CD8-positive, alpha-beta T cell (primary cell): ENCODE measurements at regions of chr15 and their contacts with region 1.

Region 1: GRCh38 chr15:41116116-41116871 is at the start of gene INO80:
- DNase-seq: peak; percentile 90 to 98 (median 96)
- ATAC-seq: peak; percentile 74
- H3K4me3 ChIP-seq: peak within 1 kb of the TSS; percentile 68 to 98
- H3K4me3 Mint-ChIP-seq: peak within 1 kb of the TSS; percentile 96
- H3K27ac ChIP-seq: peak within 1 kb of the TSS; percentile 83 to 96
- H3K27ac Mint-ChIP-seq: peak within 1 kb of the TSS; percentile 99
- H3K4me1 ChIP-seq: peaks cover 15% of the 10 kb centered on the region
- H3K4me1 Mint-ChIP-seq: peaks cover 28% of the 10 kb centered on the region
- H3K27me3 ChIP-seq: no peaks in the 10 kb centered on the region
- H3K27me3 Mint-ChIP-seq: no peaks in the 10 kb centered on the region
- CTCF ChIP-seq: no peak
- total RNA-seq, gene INO80: 19.7 to 24.2 TPM

Region 2: DNA sequence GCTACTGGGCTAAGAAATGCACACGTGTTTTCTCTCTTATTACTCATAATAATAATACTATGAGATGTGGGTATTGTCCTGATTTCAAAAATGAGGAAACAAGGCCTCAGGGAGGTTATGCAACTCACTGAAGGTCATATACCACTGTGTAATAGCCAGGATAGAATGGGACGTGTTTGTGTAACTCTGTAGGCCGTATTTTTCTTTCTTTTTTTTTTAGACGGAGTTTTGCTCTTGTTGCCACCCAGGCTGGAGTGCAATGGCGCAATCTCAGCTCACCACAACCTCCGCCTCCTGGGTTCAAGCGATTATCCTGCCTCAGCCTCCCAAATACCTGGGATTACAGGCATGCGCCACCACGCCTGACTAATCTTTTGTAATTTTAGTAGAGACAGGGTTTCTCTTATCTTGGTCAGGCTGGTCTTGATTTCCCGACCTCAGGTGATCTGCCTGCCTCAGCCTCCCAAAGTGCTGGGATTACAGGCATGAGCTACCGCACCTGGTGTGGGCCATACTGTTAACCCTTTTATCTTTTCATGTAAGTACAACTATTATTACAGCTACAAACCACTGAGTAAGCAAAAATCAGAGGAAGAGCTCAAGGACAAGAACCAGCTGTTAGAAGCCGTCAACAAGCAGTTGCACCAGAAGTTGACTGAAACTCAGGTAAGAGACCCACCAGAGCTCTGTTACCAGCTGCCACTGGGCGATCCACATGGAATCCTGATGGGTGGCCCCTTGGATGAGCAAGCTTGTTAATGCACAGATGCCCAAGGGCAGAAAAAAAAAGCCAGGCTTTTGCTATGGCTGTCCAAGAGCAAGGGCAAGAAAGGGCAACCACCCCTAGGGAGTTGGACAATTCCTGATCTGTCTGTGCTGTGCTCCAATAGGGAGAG is 727.1 kb before region 1 on chr15:
- CTCF ChIA-PET with region 1: no interaction called
- POLR2A ChIA-PET with region 1: no interaction called
- intact Hi-C with region 1: loop called (anchors 5 kb)
- DNase-seq: no peak
- ATAC-seq: no peak
- H3K4me3 ChIP-seq: no peak overlapping the region
- H3K4me3 Mint-ChIP-seq: no peak overlapping the region
- H3K27ac ChIP-seq: no peak overlapping the region
- H3K27ac Mint-ChIP-seq: no peak overlapping the region
- H3K4me1 ChIP-seq: no peaks in the 10 kb centered on the region
- H3K4me1 Mint-ChIP-seq: peaks cover 3% of the 10 kb centered on the region
- H3K27me3 ChIP-seq: no peaks in the 10 kb centered on the region
- H3K27me3 Mint-ChIP-seq: no peaks in the 10 kb centered on the region
- CTCF ChIP-seq: no peak

Region 3: DNA sequence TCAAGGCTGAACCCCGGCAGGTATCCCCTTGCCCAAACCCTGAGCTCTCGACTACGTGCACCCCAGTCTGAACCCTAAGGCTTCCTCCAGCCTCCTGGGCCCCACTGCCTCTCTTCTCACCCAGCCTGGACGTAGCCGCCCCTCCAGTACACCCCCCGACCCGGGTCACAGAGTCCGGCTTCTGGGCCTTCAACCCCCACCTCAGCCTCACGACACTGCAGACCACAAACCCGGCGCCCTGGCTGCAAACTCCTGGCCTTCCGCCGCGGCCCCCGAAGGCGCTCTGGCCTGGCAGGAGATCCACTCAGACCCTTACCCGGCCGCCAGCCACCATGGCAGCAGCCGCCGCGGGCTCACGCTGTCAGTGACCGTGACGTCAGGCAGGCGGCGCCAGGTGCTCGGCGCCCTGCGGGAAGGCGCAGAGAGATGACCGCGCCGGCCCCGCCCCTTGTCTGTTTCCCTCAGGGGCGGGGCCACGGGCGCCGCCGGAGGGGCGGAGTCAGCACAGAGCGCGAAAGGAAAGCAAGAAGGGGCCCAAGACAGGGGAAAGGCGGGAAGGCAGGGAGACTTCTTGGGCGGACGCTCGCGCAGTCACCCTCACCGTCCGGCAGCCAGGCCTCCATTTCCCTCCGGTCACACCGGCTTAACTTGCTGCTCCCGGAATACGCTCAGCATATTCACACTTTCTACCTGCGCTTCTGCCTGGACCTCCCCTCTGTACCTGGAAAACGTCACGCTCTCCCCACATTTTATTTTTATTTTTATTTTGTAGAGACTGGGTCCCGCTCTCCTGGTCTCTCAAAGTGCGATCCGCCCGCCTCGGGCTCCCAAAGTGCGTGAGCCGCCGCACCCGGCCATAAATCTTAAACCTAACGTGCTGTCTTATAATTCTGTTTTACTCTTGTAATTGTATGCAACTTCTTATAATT is 361.1 kb before region 1 on chr15 and contains the start of gene RMDN3:
- CTCF ChIA-PET with region 1: no interaction called
- POLR2A ChIA-PET with region 1: no interaction called
- intact Hi-C with region 1: loop called in 1 of 2 experiments (anchors 2 kb)
- DNase-seq: peak; percentile 84 to 96 (median 93)
- ATAC-seq: peak; percentile 95
- H3K4me3 ChIP-seq: peak within 1 kb of the TSS; percentile 99
- H3K4me3 Mint-ChIP-seq: peak within 1 kb of the TSS; percentile 94
- H3K27ac ChIP-seq: peak within 1 kb of the TSS; percentile 91 to 94
- H3K27ac Mint-ChIP-seq: peak within 1 kb of the TSS; percentile 94
- H3K4me1 ChIP-seq: peaks cover 6% of the 10 kb centered on the region
- H3K4me1 Mint-ChIP-seq: peaks cover 26% of the 10 kb centered on the region
- H3K27me3 ChIP-seq: no peaks in the 10 kb centered on the region
- H3K27me3 Mint-ChIP-seq: no peaks in the 10 kb centered on the region
- CTCF ChIP-seq: no peak
- total RNA-seq, gene RMDN3: 26.7 to 30.5 TPM

Region 4: GRCh38 chr15:40807028-40807887 is 309.0 kb before region 1 on chr15 and contains the starts of genes DNAJC17 and ZFYVE19:
- CTCF ChIA-PET with region 1: no interaction called
- POLR2A ChIA-PET with region 1: no interaction called
- intact Hi-C with region 1: no loop called
- DNase-seq: peak; percentile 86 to 97 (median 94)
- ATAC-seq: peak; percentile 97
- H3K4me3 ChIP-seq: peak within 1 kb of the TSS; percentile 85 to 88
- H3K4me3 Mint-ChIP-seq: peak within 1 kb of the TSS; percentile 99
- H3K27ac ChIP-seq: peak within 1 kb of the TSS; percentile 69 to 87
- H3K27ac Mint-ChIP-seq: peak within 1 kb of the TSS; percentile 98
- H3K4me1 ChIP-seq: peaks cover 14% of the 10 kb centered on the region
- H3K4me1 Mint-ChIP-seq: peaks cover 26% of the 10 kb centered on the region
- H3K27me3 ChIP-seq: no peaks in the 10 kb centered on the region
- H3K27me3 Mint-ChIP-seq: no peaks in the 10 kb centered on the region
- CTCF ChIP-seq: peak; percentile 17
- total RNA-seq, gene DNAJC17: 11.2 to 11.9 TPM
- total RNA-seq, gene ZFYVE19: 9.6 to 11.0 TPM

Region 5: DNA sequence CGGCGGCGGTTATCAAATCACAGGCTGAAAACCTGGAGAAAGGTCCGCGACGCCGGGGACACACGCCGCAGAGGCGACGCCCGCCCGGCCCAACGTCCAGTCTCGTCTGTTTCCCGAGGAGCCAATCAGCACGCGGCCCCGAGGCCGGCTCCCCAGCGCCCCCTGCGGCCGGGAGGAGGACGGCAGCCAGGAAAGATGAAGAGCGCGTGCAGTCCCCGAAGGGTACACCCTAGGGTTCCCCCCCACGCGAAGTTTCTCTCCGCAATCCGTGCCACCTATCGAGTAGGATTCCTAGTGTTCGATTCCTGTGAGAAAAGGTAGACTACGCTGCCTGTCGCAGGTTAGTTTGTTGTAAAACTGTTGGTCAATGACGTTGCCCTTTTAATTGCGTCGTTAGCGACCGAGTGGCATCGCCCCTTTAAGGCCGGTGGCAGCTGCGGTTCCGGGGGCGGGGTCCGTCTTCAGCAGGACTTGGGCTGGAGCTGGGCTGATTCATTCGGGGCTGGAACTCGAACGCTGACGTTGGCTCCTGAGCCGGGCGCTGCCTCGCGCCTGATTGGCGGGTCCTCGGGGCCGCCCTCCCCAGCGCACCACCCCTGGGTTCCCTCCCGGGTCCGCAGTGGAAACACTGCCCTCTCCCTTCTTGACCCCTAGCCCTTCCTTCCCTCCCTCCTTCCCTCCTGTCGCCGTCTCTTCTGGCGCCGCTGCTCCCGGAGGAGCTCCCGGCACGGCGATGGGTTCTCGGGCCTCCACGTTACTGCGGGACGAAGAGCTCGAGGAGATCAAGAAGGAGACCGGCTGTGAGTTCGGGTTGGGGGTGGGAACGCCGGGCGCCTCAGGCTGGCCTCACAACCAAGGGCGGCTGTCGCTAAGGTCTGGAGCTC is 114.6 kb after region 1 on chr15 and contains the starts of genes CHP1 and EXD1:
- CTCF ChIA-PET with region 1: interaction called, 3 read pairs
- POLR2A ChIA-PET with region 1: interaction called, 9 read pairs
- intact Hi-C with region 1: loop called in 1 of 2 experiments (anchors 1 kb)
- DNase-seq: peak; percentile 89 to 97 (median 94)
- ATAC-seq: peak; percentile 95
- H3K4me3 ChIP-seq: peak within 1 kb of the TSS; percentile 83 to 89
- H3K4me3 Mint-ChIP-seq: peak within 1 kb of the TSS; percentile 89
- H3K27ac ChIP-seq: peak within 1 kb of the TSS; percentile 74 to 85
- H3K27ac Mint-ChIP-seq: peak within 1 kb of the TSS; percentile 90
- H3K4me1 ChIP-seq: peaks cover 27% of the 10 kb centered on the region
- H3K4me1 Mint-ChIP-seq: peaks cover 37% of the 10 kb centered on the region
- H3K27me3 ChIP-seq: no peaks in the 10 kb centered on the region
- H3K27me3 Mint-ChIP-seq: no peaks in the 10 kb centered on the region
- CTCF ChIP-seq: peak; percentile 99
- total RNA-seq, gene CHP1: 25.6 to 28.9 TPM
- total RNA-seq, gene EXD1: not detected

Region 6: GRCh38 chr15:41401904-41402267 is 285.6 kb after region 1 on chr15:
- CTCF ChIA-PET with region 1: no interaction called
- POLR2A ChIA-PET with region 1: no interaction called
- intact Hi-C with region 1: loop called (anchors 5 kb)
- DNase-seq: no peak
- ATAC-seq: no peak
- H3K4me3 ChIP-seq: peak overlapping the region; percentile 81 to 95
- H3K4me3 Mint-ChIP-seq: peak overlapping the region; percentile 96
- H3K27ac ChIP-seq: peak overlapping the region; percentile 81 to 84
- H3K27ac Mint-ChIP-seq: peak overlapping the region; percentile 96
- H3K4me1 ChIP-seq: peaks cover 10% of the 10 kb centered on the region
- H3K4me1 Mint-ChIP-seq: peaks cover 23% of the 10 kb centered on the region
- H3K27me3 ChIP-seq: no peaks in the 10 kb centered on the region
- H3K27me3 Mint-ChIP-seq: no peaks in the 10 kb centered on the region
- CTCF ChIP-seq: no peak

Region 7: DNA sequence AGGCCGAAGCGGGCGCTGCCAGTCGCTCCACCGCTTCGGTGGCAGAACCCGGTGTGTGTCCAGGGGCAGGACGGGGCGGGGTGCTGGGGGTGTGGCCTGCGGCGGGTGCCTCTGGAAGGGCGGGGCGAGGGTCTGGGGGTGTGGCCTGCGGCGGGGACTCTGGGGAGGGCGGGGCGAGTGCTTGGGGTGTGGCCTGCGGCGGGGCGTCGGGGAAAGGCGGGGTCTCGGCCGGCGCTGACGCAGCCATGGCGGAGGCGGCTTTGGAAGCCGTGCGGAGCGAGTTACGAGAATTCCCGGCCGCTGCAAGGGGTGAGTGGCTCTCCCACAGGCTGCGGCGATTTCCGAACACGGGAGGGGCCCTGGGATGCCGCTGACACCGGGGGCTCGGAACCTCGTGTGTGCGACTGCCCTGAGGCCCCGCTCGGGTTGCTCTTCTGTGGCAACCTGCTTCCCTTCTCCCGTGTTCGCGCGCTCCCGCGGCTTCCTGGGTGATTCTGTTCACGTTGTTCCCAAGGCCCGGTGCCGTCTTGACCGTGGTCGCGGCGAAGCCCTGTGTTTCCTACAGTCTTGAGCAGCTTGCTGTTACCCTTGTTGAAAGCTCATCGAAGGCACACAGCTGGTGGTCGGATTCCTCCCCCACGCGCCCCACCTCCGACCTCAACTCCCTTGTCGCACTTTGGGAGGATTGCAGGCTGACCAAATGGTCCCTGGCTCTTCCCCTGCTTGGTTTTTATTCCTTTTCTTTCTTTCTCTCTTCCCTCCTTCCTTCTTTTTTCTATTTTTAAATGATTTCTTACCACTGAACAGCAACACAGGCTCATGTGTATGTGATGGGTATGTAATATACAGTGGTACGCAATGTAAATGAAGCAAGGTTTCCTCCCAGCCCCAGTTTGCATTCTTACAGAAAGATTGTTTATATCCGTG is 711.8 kb after region 1 on chr15 and contains the start of gene JMJD7:
- CTCF ChIA-PET with region 1: no interaction called
- POLR2A ChIA-PET with region 1: no interaction called
- intact Hi-C with region 1: loop called in 1 of 2 experiments (anchors 5 kb)
- DNase-seq: peak; percentile 93 to 98 (median 95)
- ATAC-seq: peak; percentile 97
- H3K4me3 ChIP-seq: peak within 1 kb of the TSS; percentile 93 to 95
- H3K4me3 Mint-ChIP-seq: peak within 1 kb of the TSS; percentile 83
- H3K27ac ChIP-seq: peak within 1 kb of the TSS; percentile 74 to 87
- H3K27ac Mint-ChIP-seq: peak within 1 kb of the TSS; percentile 87
- H3K4me1 ChIP-seq: peaks cover 35% of the 10 kb centered on the region
- H3K4me1 Mint-ChIP-seq: peaks cover 44% of the 10 kb centered on the region
- H3K27me3 ChIP-seq: no peaks in the 10 kb centered on the region
- H3K27me3 Mint-ChIP-seq: no peaks in the 10 kb centered on the region
- CTCF ChIP-seq: no peak
- total RNA-seq, gene JMJD7: 27.5 to 38.3 TPM

Region 8: GRCh38 chr15:42152196-42152920 is 1036.1 kb after region 1 on chr15:
- CTCF ChIA-PET with region 1: no interaction called
- POLR2A ChIA-PET with region 1: no interaction called
- intact Hi-C with region 1: no loop called
- DNase-seq: no peak
- ATAC-seq: no peak
- H3K4me3 ChIP-seq: no peak overlapping the region
- H3K4me3 Mint-ChIP-seq: no peak overlapping the region
- H3K27ac ChIP-seq: no peak overlapping the region
- H3K27ac Mint-ChIP-seq: no peak overlapping the region
- H3K4me1 ChIP-seq: no peaks in the 10 kb centered on the region
- H3K4me1 Mint-ChIP-seq: no peaks in the 10 kb centered on the region
- H3K27me3 ChIP-seq: no peaks in the 10 kb centered on the region
- H3K27me3 Mint-ChIP-seq: no peaks in the 10 kb centered on the region
- CTCF ChIP-seq: no peak